ENCODE measurements at regions of chr16 and their contacts with region 1.

Region 1: DNA sequence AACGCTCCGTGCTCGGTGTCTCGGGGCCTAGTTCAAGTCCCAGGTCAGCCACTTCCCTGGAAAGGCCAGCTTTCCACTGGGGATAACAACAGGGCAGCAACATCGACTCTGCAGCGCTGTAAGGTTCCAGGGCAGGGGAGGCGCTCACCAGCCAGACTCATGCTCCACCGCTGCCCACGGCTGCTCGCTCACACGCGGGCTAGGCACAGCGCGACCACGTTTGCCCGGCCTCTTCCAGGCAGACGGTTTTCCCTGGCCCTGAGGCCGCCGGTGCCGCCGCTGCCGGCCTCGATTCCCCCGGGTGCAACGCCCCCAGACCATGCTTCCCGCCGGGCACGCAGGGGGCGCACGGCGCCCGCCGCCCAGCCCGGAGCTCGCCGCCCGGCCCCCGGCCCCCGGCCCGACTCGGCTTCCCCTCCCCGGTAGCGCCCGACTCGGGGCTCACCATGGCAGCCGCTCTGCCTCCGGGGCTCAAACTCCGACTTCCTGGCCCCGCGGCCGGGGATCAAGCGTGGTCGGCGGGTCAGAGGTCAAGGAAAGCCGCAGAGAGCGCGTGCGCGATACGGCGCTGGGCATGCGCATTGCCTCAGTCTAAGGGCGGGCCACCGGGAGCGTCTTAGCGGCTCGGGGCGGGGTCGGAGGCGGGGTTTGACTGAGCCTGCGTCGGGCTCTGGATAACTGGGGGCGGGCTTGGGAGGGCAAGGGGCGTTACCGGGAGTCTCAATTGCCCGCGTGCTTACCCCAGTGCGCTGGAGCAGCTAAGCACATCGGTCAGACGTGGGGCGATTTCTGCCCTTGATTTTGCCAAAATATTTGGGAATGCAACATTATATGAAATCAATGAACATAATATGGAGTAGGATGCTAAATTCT is at the start of gene PAM16:
- DNase-seq: peak; percentile 95 to 100 (median 97)
- ATAC-seq: peak; percentile 85
- H3K4me3 ChIP-seq: peak within 1 kb of the TSS; percentile 96
- H3K4me3 Mint-ChIP-seq: peak within 1 kb of the TSS; percentile 98
- H3K27ac ChIP-seq: peak within 1 kb of the TSS; percentile 69 to 71
- H3K27ac Mint-ChIP-seq: peak within 1 kb of the TSS; percentile 94
- H3K4me1 ChIP-seq: peaks cover 42% of the 10 kb centered on the region
- H3K4me1 Mint-ChIP-seq: peaks cover 27% of the 10 kb centered on the region
- H3K27me3 ChIP-seq: no peaks in the 10 kb centered on the region
- H3K27me3 Mint-ChIP-seq: no peaks in the 10 kb centered on the region
- CTCF ChIP-seq: no peak
- total RNA-seq, gene PAM16: 24.9 to 26.8 TPM

Region 2: GRCh38 chr16:4307215-4308037 is 43.6 kb before region 1 on chr16:
- CTCF ChIA-PET with region 1: interaction called, 4 read pairs
- POLR2A ChIA-PET with region 1: interaction called, 7 read pairs
- intact Hi-C with region 1: loop called in 1 of 2 experiments (anchors 1 kb)
- DNase-seq: peak; percentile 91 to 99 (median 96)
- ATAC-seq: peak; percentile 87
- H3K4me3 ChIP-seq: peak overlapping the region; percentile 72
- H3K4me3 Mint-ChIP-seq: peak overlapping the region; percentile 84
- H3K27ac ChIP-seq: peak overlapping the region; percentile 82 to 90
- H3K27ac Mint-ChIP-seq: peak overlapping the region; percentile 96
- H3K4me1 ChIP-seq: peaks cover 31% of the 10 kb centered on the region
- H3K4me1 Mint-ChIP-seq: peaks cover 15% of the 10 kb centered on the region
- H3K27me3 ChIP-seq: no peaks in the 10 kb centered on the region
- H3K27me3 Mint-ChIP-seq: no peaks in the 10 kb centered on the region
- CTCF ChIP-seq: no peak

Region 3: GRCh38 chr16:4371357-4372000 is 20.5 kb after region 1 on chr16 and contains the start of gene VASN:
- CTCF ChIA-PET with region 1: no interaction called
- POLR2A ChIA-PET with region 1: interaction called, 4 read pairs
- intact Hi-C with region 1: loop called in 1 of 2 experiments (anchors 2 kb)
- DNase-seq: peak; percentile 54 to 86 (median 68)
- ATAC-seq: peak; percentile 71
- H3K4me3 ChIP-seq: peak within 1 kb of the TSS; percentile 49
- H3K4me3 Mint-ChIP-seq: peak within 1 kb of the TSS; percentile 89
- H3K27ac ChIP-seq: no peak within 1 kb of the TSS
- H3K27ac Mint-ChIP-seq: peak within 1 kb of the TSS; percentile 77
- H3K4me1 ChIP-seq: peaks cover 57% of the 10 kb centered on the region
- H3K4me1 Mint-ChIP-seq: peaks cover 35% of the 10 kb centered on the region
- H3K27me3 ChIP-seq: no peaks in the 10 kb centered on the region
- H3K27me3 Mint-ChIP-seq: no peaks in the 10 kb centered on the region
- CTCF ChIP-seq: no peak
- total RNA-seq, gene VASN: 0.70 to 0.77 TPM

Region 4: GRCh38 chr16:4391631-4392381 is 40.8 kb after region 1 on chr16:
- CTCF ChIA-PET with region 1: no interaction called
- POLR2A ChIA-PET with region 1: no interaction called
- intact Hi-C with region 1: no loop called
- DNase-seq: peak in 2 of 14 experiments; percentile 8 to 27
- ATAC-seq: peak; percentile 21
- H3K4me3 ChIP-seq: no peak overlapping the region
- H3K4me3 Mint-ChIP-seq: no peak overlapping the region
- H3K27ac ChIP-seq: no peak overlapping the region
- H3K27ac Mint-ChIP-seq: peak overlapping the region; percentile 17
- H3K4me1 ChIP-seq: peaks cover 13% of the 10 kb centered on the region
- H3K4me1 Mint-ChIP-seq: peaks cover 5% of the 10 kb centered on the region
- H3K27me3 ChIP-seq: no peaks in the 10 kb centered on the region
- H3K27me3 Mint-ChIP-seq: no peaks in the 10 kb centered on the region
- CTCF ChIP-seq: no peak

Region 5: GRCh38 chr16:4402439-4403132 is 51.6 kb after region 1 on chr16:
- CTCF ChIA-PET with region 1: interaction called, 10 read pairs
- POLR2A ChIA-PET with region 1: no interaction called
- intact Hi-C with region 1: no loop called
- DNase-seq: peak in 13 of 14 experiments; percentile 47 to 78 (median 64)
- ATAC-seq: peak; percentile 39
- H3K4me3 ChIP-seq: no peak overlapping the region
- H3K4me3 Mint-ChIP-seq: peak overlapping the region; percentile 20
- H3K27ac ChIP-seq: no peak overlapping the region
- H3K27ac Mint-ChIP-seq: peak overlapping the region; percentile 84
- H3K4me1 ChIP-seq: peaks cover 23% of the 10 kb centered on the region
- H3K4me1 Mint-ChIP-seq: peaks cover 22% of the 10 kb centered on the region
- H3K27me3 ChIP-seq: no peaks in the 10 kb centered on the region
- H3K27me3 Mint-ChIP-seq: no peaks in the 10 kb centered on the region
- CTCF ChIP-seq: peak; percentile 77

Region 6: GRCh38 chr16:4828567-4829321 is 477.7 kb after region 1 on chr16:
- CTCF ChIA-PET with region 1: no interaction called
- POLR2A ChIA-PET with region 1: no interaction called
- intact Hi-C with region 1: no loop called
- DNase-seq: no peak
- ATAC-seq: no peak
- H3K4me3 ChIP-seq: no peak overlapping the region
- H3K4me3 Mint-ChIP-seq: no peak overlapping the region
- H3K27ac ChIP-seq: no peak overlapping the region
- H3K27ac Mint-ChIP-seq: no peak overlapping the region
- H3K4me1 ChIP-seq: no peaks in the 10 kb centered on the region
- H3K4me1 Mint-ChIP-seq: peaks cover 5% of the 10 kb centered on the region
- H3K27me3 ChIP-seq: no peaks in the 10 kb centered on the region
- H3K27me3 Mint-ChIP-seq: no peaks in the 10 kb centered on the region
- CTCF ChIP-seq: no peak

Region 7: DNA sequence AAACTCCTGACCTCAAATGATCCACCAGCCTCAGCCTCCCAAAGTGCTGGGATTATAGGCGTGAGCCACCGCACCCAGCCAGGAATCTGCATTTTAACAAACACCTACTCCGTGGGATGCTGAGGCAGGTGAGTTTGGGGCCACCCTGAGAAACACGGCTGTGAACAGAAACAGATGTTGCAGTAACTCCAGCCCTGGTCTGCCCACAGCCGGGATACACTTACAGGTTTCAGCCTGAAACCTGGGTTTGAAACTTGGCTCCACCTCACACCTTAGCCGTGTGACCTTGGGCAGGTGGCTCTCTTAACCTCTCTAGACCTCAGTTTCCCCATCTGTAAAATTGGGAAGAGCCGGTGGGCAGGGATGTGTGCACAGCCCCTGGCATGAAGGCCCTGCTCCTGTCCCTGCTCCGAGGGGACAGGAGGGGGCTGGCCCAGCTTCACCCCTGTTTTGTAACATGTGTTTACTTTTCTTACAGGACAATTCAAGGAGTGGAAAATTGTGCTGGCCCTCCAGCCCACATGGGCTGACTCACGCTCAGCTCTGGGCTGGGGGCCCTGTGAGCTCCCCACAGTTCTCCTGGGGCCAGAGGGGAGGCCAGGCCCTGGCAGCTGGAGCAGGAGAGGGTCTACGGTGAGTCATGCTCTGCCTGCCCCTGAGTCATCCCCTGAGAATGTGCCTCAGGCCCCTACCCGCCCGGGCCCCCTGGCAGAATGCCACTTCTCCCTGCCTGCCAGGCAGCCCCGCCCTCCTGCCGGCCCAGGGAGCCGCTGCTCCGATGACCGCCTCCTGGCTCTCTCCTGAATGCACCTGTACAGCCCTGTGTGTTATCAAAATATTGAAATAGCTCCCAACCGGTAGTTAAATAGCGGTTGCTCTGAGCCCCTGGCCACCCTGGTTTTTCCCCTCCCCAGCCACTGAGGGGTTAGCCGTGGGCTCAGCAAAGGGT is 593.6 kb after region 1 on chr16:
- CTCF ChIA-PET with region 1: no interaction called
- POLR2A ChIA-PET with region 1: no interaction called
- intact Hi-C with region 1: no loop called
- DNase-seq: peak in 1 of 14 experiments; percentile 42
- ATAC-seq: no peak
- H3K4me3 ChIP-seq: no peak overlapping the region
- H3K4me3 Mint-ChIP-seq: no peak overlapping the region
- H3K27ac ChIP-seq: no peak overlapping the region
- H3K27ac Mint-ChIP-seq: no peak overlapping the region
- H3K4me1 ChIP-seq: peaks cover 3% of the 10 kb centered on the region
- H3K4me1 Mint-ChIP-seq: no peaks in the 10 kb centered on the region
- H3K27me3 ChIP-seq: peaks cover 0 to 7% of the 10 kb centered on the region in 2 experiments
- H3K27me3 Mint-ChIP-seq: peaks cover 36% of the 10 kb centered on the region
- CTCF ChIP-seq: no peak